Activated B cell treated with CpG ODN at 0.5 μM for 24 hours (primary cell): ENCODE measurements at regions of chrX and their contacts with region 1.

Region 1: GRCh38 chrX:70433848-70434351 is 10.7 kb upstream of the DLG3 start:
- DNase-seq: peak; percentile 60
- ATAC-seq: peak; percentile 76
- H3K4me3 Mint-ChIP-seq: peak overlapping the region; percentile 89
- H3K27ac Mint-ChIP-seq: peak overlapping the region; percentile 87
- H3K4me1 Mint-ChIP-seq: peaks cover 14% of the 10 kb centered on the region
- H3K27me3 Mint-ChIP-seq: no peaks in the 10 kb centered on the region
- CTCF ChIP-seq: no peak

Region 2: GRCh38 chrX:69538321-69538876 is 895.5 kb before region 1 on chrX:
- CTCF ChIA-PET with region 1: no interaction called
- POLR2A ChIA-PET with region 1: no interaction called
- intact Hi-C with region 1: loop called (anchors 2 kb)
- DNase-seq: peak; percentile 51
- ATAC-seq: peak; percentile 78
- H3K4me3 Mint-ChIP-seq: peak overlapping the region; percentile 58
- H3K27ac Mint-ChIP-seq: no peak overlapping the region
- H3K4me1 Mint-ChIP-seq: peaks cover 21% of the 10 kb centered on the region
- H3K27me3 Mint-ChIP-seq: no peaks in the 10 kb centered on the region
- CTCF ChIP-seq: no peak

Region 3: DNA sequence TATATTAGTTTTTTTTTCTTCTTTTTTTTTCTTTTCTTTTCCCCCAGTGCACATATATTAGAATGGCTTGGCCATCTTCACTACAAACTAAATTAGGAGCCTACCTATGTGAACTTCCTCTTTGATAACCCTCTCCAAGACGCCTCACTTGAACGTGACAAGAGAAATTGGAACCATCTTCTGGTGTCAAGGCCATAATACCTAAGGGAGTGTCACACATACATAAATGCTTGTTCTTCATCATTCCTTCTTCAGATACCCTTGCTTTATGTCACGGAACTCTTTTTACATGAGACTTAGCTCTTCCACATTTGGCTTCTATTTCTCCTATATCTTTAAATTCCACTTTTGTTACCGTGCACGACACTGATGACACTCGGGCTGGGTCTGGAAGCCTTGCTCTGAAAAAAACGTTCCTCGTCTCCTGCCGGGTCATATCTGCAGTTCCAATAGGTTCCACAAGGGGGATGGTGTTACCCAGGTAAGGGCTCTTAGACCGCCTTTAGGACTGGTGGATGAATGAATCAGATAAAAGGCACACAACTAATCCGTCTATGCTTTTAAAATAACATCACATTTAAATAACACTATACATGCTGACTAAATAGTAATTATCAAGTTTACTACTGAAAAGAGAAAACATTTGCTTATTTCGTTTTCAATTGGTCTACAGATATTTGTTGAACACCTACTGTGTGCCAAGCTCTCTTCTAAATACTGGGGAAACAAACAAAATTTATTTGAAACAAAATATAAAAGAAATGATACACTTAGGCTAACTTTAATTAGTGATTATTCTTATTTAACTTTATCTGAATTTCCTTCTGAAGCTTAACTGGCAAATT is 236.7 kb before region 1 on chrX:
- CTCF ChIA-PET with region 1: interaction called, 3 read pairs
- POLR2A ChIA-PET with region 1: no interaction called
- intact Hi-C with region 1: loop called (anchors 1 kb)
- DNase-seq: peak; percentile 14
- ATAC-seq: peak; percentile 79
- H3K4me3 Mint-ChIP-seq: peak overlapping the region; percentile 6
- H3K27ac Mint-ChIP-seq: no peak overlapping the region
- H3K4me1 Mint-ChIP-seq: peaks cover 4% of the 10 kb centered on the region
- H3K27me3 Mint-ChIP-seq: peaks cover 2% of the 10 kb centered on the region
- CTCF ChIP-seq: no peak

Region 4: GRCh38 chrX:70289793-70290776 is 143.8 kb before region 1 on chrX and contains the starts of genes KIF4A and PDZD11:
- CTCF ChIA-PET with region 1: no interaction called
- POLR2A ChIA-PET with region 1: no interaction called
- intact Hi-C with region 1: loop called (anchors 2 kb)
- DNase-seq: peak; percentile 67
- ATAC-seq: peak; percentile 100
- H3K4me3 Mint-ChIP-seq: peak within 1 kb of the TSS; percentile 86
- H3K27ac Mint-ChIP-seq: peak within 1 kb of the TSS; percentile 72
- H3K4me1 Mint-ChIP-seq: peaks cover 13% of the 10 kb centered on the region
- H3K27me3 Mint-ChIP-seq: no peaks in the 10 kb centered on the region
- CTCF ChIP-seq: no peak
- total RNA-seq, gene KIF4A: 0.49 TPM in 2 replicates
- total RNA-seq, gene PDZD11: 17.1 and 18.5 TPM in 2 replicates

Region 5: DNA sequence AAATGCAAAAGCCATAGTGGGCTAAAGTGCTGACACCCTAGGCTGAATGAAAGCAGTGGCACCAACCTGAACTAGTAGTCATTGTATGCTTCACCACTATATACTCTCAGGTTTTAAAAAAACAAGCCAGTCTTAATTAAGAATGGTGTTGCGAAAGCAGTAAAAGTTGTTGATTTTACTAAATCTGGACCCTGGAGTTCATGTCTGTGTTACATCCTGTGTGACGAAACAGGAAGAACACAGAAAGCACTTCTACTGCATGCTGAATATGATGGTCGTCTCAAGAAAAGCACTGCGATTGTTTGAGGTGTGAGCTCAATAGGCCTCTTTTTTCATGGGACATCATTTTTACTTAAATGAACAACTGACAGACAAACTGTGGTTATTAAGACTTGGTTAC is 35.0 kb before region 1 on chrX:
- CTCF ChIA-PET with region 1: no interaction called
- POLR2A ChIA-PET with region 1: interaction called, 13 read pairs
- intact Hi-C with region 1: no loop called
- DNase-seq: no peak
- ATAC-seq: no peak
- H3K4me3 Mint-ChIP-seq: no peak overlapping the region
- H3K27ac Mint-ChIP-seq: no peak overlapping the region
- H3K4me1 Mint-ChIP-seq: peaks cover 3% of the 10 kb centered on the region
- H3K27me3 Mint-ChIP-seq: no peaks in the 10 kb centered on the region
- CTCF ChIP-seq: no peak

Region 6: DNA sequence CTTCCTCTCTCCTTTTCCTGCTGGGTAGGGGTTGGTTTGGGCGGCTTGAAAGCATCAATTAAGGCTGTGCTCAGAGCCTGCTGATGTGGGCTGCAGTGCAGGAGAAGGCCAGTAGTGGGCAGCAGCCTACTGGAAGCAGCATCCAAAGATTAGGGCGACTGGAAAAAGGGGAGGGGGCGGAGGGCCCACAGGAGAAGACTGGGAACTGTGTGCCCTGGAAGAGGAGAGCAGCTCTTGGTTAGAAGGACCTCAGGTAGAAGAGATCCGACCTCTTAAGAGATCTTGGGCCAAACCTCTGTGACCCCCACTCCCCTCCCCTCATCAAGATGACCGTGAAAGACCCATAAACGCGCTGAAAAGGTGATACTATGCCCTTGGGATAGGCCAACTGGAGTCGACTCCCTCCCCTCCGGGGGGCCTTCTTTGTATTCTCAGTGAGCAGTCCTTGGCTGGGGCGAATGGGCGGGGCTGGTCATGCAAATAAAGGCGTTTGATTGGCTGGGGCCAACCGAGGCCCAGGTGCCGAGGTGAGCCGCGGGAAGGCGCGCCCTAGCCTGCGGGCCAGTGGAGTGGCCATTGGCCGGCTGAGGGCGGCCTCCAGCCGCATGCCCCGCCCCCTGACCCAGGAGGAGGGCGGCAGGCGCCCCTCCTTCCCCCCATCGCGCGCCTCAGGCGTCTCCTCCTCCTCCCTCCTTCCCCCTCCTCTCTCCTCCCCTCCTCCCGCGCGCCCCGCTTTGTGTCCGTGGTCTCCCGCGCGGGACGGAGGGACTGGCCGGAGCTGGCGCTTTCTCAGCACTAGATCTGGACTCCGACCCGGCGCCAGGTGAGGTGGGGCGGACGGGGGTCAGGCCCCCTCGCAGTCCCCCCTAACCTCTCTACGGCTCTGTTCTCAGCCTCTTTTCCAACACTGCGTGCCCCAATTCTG is 20.8 kb after region 1 on chrX:
- CTCF ChIA-PET with region 1: interaction called, 4 read pairs
- POLR2A ChIA-PET with region 1: interaction called, 16 read pairs
- intact Hi-C with region 1: loop called (anchors 1 kb)
- DNase-seq: peak; percentile 39
- ATAC-seq: peak; percentile 55
- H3K4me3 Mint-ChIP-seq: peak overlapping the region; percentile 78
- H3K27ac Mint-ChIP-seq: peak overlapping the region; percentile 46
- H3K4me1 Mint-ChIP-seq: peaks cover 43% of the 10 kb centered on the region
- H3K27me3 Mint-ChIP-seq: no peaks in the 10 kb centered on the region
- CTCF ChIP-seq: no peak

Region 7: GRCh38 chrX:71366674-71367256 is 932.9 kb after region 1 on chrX:
- CTCF ChIA-PET with region 1: no interaction called
- POLR2A ChIA-PET with region 1: no interaction called
- intact Hi-C with region 1: no loop called
- DNase-seq: no peak
- ATAC-seq: no peak
- H3K4me3 Mint-ChIP-seq: peak overlapping the region; percentile 99
- H3K27ac Mint-ChIP-seq: peak overlapping the region; percentile 99
- H3K4me1 Mint-ChIP-seq: peaks cover 26% of the 10 kb centered on the region
- H3K27me3 Mint-ChIP-seq: no peaks in the 10 kb centered on the region
- CTCF ChIP-seq: no peak